Activated CD4-positive, alpha-beta memory T cell treated with anti-CD3 and anti-CD28 coated beads, Interleukin-2, amount 10 ng/mL, durations not matched to agents 7 days and 5 days (primary cell): ENCODE measurements at regions of chr15 and their contacts with region 1.

Region 1: GRCh38 chr15:47196057-47196456 is 521.2 kb upstream of the SEMA6D start:
- DNase-seq: peak; percentile 48
- H3K4me3 Mint-ChIP-seq: no peak overlapping the region
- H3K27ac Mint-ChIP-seq: no peak overlapping the region
- H3K4me1 Mint-ChIP-seq: no peaks in the 10 kb centered on the region
- H3K27me3 Mint-ChIP-seq: no peaks in the 10 kb centered on the region

Region 2: GRCh38 chr15:47987908-47988532 is 792.0 kb after region 1 on chr15:
- CTCF ChIA-PET with region 1: interaction called, 27 read pairs
- POLR2A ChIA-PET with region 1: no interaction called
- DNase-seq: peak; percentile 19
- H3K4me3 Mint-ChIP-seq: no peak overlapping the region
- H3K27ac Mint-ChIP-seq: no peak overlapping the region
- H3K4me1 Mint-ChIP-seq: no peaks in the 10 kb centered on the region
- H3K27me3 Mint-ChIP-seq: peaks cover 10% of the 10 kb centered on the region

Region 3: DNA sequence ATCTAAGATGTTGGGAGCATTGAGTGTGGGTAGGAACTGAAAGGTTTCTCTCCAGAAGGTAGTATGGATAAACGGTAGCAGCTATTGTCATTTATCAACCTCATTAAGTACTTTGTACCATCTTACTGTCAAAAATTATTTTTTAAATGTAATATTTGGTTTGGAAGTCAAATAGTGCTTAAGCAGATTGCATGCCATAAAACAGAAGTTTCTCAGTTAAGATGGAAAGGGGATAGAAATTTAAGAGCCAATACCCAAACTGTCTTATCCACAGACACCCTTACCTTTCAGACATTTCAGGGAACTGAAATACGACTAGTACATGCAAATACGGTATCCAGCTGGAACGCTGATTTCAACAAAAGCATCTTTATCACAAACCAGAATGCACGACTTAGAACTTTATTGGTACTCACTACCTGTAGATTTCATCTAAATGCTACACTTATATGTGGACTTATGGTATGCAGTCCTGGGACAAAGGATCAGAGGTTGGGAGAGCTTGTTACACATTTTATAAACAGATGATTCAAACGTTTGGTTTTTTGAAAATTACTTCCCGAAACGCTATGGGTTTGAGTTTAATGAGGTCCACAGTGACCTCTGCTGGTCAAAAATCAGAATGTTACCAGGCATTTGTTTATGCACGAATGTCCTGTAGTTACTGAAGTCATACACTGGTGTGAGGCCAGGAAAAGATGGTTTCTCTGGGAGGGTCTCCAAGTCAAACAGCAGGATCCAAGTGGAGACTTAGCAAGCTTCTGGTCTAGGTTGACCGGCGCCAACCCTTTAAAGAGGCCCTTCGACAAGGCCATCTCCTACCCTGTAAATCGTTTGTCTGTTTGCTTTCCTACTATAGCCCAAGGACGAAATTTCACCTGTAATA is 1089.5 kb after region 1 on chr15:
- CTCF ChIA-PET with region 1: interaction called, 11 read pairs
- POLR2A ChIA-PET with region 1: no interaction called
- DNase-seq: peak; percentile 37
- H3K4me3 Mint-ChIP-seq: no peak overlapping the region
- H3K27ac Mint-ChIP-seq: no peak overlapping the region
- H3K4me1 Mint-ChIP-seq: peaks cover 2% of the 10 kb centered on the region
- H3K27me3 Mint-ChIP-seq: peaks cover 6% of the 10 kb centered on the region